CD4-positive, alpha-beta T cell (primary cell): ENCODE measurements at regions of chr1 and their contacts with region 1.

Region 1: GRCh38 chr1:9657521-9658032 is 6.0 kb downstream of the PIK3CD start:
- DNase-seq: no peak
- ATAC-seq: no peak
- H3K4me3 ChIP-seq: no peak overlapping the region
- H3K4me3 Mint-ChIP-seq: peak overlapping the region; percentile 72
- H3K27ac ChIP-seq: peak overlapping the region; percentile 34 to 63
- H3K27ac Mint-ChIP-seq: peak overlapping the region; percentile 97
- H3K4me1 ChIP-seq: peaks cover 73% of the 10 kb centered on the region
- H3K4me1 Mint-ChIP-seq: peaks cover 82% of the 10 kb centered on the region
- H3K27me3 ChIP-seq: no peaks in the 10 kb centered on the region
- H3K27me3 Mint-ChIP-seq: no peaks in the 10 kb centered on the region
- CTCF ChIP-seq: no peak

Region 2: DNA sequence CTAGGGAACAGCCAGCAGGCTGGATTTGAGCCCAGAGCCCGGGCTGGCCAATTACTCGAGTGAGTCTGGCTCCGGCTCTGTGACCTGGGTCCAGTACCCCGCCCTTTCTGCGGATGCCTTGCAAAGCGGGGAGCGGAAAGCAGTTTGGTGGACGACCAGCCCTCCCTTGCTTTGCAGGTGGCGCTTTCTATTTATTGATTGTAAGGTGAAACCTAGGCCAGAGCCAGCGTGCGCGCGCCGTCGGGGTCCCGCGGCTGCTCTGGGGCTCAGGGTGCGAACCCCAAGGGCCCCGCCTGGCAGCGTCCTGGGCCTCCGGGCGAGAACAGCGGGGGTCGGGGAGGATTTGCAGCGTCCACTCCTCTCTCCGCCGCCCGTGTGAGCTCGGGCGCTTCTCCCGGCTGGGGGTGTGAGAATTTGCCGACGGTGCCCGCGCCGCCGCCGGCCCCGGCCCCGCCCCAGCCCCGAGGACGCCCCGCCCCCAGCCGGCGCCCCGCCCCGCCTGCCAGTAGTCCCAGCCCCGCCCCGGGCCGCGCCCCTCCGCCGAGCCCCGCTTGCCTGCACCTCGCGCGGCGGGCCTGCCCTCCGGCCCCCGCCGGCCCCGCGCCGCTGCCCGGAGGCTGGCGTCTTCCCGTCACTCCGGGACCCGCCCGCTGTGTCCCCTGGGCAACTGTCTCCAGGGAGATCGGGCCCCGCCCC is 31.6 kb after region 1 on chr1:
- CTCF ChIA-PET with region 1: interaction called, 6 read pairs
- POLR2A ChIA-PET with region 1: interaction called, 201 read pairs
- intact Hi-C with region 1: loop called (anchors 1 to 2 kb)
- DNase-seq: peak; percentile 76 to 92 (median 83)
- ATAC-seq: peak; percentile 78
- H3K4me3 ChIP-seq: peak overlapping the region; percentile 61
- H3K4me3 Mint-ChIP-seq: peak overlapping the region; percentile 88
- H3K27ac ChIP-seq: peak overlapping the region in 1 of 2 donors; percentile 40
- H3K27ac Mint-ChIP-seq: peak overlapping the region; percentile 74
- H3K4me1 ChIP-seq: peaks cover 76% of the 10 kb centered on the region
- H3K4me1 Mint-ChIP-seq: peaks cover 76% of the 10 kb centered on the region
- H3K27me3 ChIP-seq: no peaks in the 10 kb centered on the region
- H3K27me3 Mint-ChIP-seq: no peaks in the 10 kb centered on the region
- CTCF ChIP-seq: no peak